Activated naive CD4-positive, alpha-beta T cell treated with anti-CD3 and anti-CD28 coated beads for 36 hours (primary cell): ENCODE measurements at regions of chr15 and their contacts with region 1.

Region 1: GRCh38 chr15:89893696-89894455 is at the start of gene AP3S2:
- DNase-seq: peak; percentile 94
- H3K4me3 Mint-ChIP-seq: peak within 1 kb of the TSS; percentile 97
- H3K27ac Mint-ChIP-seq: peak within 1 kb of the TSS; percentile 96
- H3K4me1 Mint-ChIP-seq: peaks cover 42% of the 10 kb centered on the region
- H3K27me3 Mint-ChIP-seq: no peaks in the 10 kb centered on the region
- total RNA-seq, gene AP3S2: 20.2 to 25.2 TPM

Region 2: GRCh38 chr15:89334510-89335288 is 559.2 kb before region 1 on chr15 and contains the start of gene POLG:
- CTCF ChIA-PET with region 1: no interaction called
- intact Hi-C with region 1: loop called (anchors 10 kb)
- DNase-seq: peak; percentile 99
- H3K4me3 Mint-ChIP-seq: peak within 1 kb of the TSS; percentile 90
- H3K27ac Mint-ChIP-seq: peak within 1 kb of the TSS; percentile 94
- H3K4me1 Mint-ChIP-seq: peaks cover 52% of the 10 kb centered on the region
- H3K27me3 Mint-ChIP-seq: peaks cover 3% of the 10 kb centered on the region
- total RNA-seq, gene POLG: 93.0 to 96.5 TPM

Region 3: GRCh38 chr15:89728254-89728653 is 165.6 kb before region 1 on chr15:
- CTCF ChIA-PET with region 1: no interaction called
- intact Hi-C with region 1: no loop called
- DNase-seq: no peak
- H3K4me3 Mint-ChIP-seq: no peak overlapping the region
- H3K27ac Mint-ChIP-seq: no peak overlapping the region
- H3K4me1 Mint-ChIP-seq: no peaks in the 10 kb centered on the region
- H3K27me3 Mint-ChIP-seq: no peaks in the 10 kb centered on the region

Region 4: DNA sequence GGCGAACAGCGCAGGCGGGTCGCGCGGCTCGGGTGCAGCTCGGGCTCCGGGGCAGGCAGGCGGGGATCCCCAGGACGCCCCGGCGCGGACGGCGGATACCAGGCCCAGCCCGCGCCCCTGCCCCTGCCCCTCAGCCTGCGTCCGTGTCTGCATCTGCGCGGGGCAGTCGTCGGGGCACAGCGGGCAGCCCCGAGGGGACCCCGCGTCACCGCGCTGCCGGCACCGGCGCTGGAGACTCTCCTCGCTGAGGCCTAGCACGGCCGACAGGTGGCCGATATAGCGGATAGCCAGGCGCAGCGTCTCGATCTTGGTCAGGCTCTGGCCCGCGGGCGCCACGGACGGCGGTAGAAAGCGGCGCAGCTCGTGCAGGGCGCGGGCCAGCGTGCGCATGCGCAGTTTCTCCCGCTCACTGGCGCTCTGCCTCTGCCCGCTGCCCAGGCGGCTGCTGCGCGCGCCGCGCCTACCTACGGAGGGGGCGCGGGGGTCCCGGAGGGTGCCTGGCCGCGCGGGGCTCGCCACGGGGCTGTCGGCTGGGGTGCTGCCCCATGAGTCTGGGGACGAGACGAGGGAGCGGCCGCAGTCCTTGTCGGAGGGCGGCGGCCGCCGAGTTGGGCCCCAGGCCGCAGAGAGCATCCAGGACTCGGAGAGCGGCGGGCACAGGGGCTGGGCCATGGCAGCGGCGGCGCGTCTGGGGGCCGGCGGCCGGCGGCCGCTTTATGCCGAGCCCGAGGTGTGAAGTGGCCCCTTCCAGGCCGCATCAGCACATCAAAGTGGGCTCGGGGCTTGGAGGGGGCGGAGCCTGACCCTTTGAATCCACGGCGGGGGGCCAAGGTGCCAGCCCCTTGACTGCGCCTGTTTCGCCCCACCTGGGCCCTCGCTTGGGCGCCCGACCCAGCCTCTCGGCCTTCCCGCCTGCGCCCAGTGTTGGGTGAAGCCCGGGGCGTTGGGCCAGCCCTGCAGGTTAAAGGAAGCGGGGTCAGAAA is 143.0 kb before region 1 on chr15 and contains the start of gene MESP1:
- CTCF ChIA-PET with region 1: no interaction called
- intact Hi-C with region 1: loop called (anchors 5 kb)
- DNase-seq: peak; percentile 89
- H3K4me3 Mint-ChIP-seq: peak within 1 kb of the TSS; percentile 77
- H3K27ac Mint-ChIP-seq: no peak within 1 kb of the TSS
- H3K4me1 Mint-ChIP-seq: peaks cover 5% of the 10 kb centered on the region
- H3K27me3 Mint-ChIP-seq: peaks cover 16% of the 10 kb centered on the region
- total RNA-seq, gene MESP1: 4.4 to 6.6 TPM

Region 5: GRCh38 chr15:90001683-90002427 is 108.0 kb after region 1 on chr15:
- CTCF ChIA-PET with region 1: no interaction called
- intact Hi-C with region 1: loop called (anchors 2 kb)
- DNase-seq: peak; percentile 70
- H3K4me3 Mint-ChIP-seq: peak overlapping the region; percentile 82
- H3K27ac Mint-ChIP-seq: peak overlapping the region; percentile 75
- H3K4me1 Mint-ChIP-seq: peaks cover 57% of the 10 kb centered on the region
- H3K27me3 Mint-ChIP-seq: no peaks in the 10 kb centered on the region

Region 6: DNA sequence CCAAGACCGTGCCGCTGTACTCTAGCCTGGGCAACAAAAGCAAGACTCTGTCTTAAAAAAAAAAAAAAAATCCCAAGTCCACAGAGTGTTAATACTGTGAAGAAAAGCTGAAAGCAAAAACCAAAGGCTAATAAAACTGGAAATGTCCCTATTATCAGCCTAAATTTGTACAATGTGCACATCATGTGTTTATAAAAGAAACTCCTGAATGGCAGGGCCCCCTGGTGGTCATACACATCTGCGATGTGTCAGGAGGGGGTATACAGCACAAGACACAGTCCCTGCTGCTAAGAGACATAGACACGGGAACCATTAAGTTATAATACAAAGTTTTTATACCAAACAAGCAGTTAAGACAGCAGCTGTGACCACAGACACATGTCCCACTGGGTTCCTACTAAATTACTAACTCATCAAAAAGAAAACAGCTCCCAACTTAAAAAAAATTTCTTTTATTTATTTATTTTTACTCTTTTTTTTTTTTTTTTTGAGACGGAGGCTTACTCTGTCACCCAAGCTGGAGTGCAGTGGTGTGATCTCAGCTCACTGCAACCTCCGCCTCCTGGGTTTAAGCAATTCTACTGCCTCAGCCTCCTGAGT is 177.4 kb after region 1 on chr15:
- CTCF ChIA-PET with region 1: interaction called, 60 read pairs
- intact Hi-C with region 1: loop called (anchors 1 kb)
- DNase-seq: peak; percentile 92
- H3K4me3 Mint-ChIP-seq: no peak overlapping the region
- H3K27ac Mint-ChIP-seq: no peak overlapping the region
- H3K4me1 Mint-ChIP-seq: peaks cover 12% of the 10 kb centered on the region
- H3K27me3 Mint-ChIP-seq: no peaks in the 10 kb centered on the region

Region 7: DNA sequence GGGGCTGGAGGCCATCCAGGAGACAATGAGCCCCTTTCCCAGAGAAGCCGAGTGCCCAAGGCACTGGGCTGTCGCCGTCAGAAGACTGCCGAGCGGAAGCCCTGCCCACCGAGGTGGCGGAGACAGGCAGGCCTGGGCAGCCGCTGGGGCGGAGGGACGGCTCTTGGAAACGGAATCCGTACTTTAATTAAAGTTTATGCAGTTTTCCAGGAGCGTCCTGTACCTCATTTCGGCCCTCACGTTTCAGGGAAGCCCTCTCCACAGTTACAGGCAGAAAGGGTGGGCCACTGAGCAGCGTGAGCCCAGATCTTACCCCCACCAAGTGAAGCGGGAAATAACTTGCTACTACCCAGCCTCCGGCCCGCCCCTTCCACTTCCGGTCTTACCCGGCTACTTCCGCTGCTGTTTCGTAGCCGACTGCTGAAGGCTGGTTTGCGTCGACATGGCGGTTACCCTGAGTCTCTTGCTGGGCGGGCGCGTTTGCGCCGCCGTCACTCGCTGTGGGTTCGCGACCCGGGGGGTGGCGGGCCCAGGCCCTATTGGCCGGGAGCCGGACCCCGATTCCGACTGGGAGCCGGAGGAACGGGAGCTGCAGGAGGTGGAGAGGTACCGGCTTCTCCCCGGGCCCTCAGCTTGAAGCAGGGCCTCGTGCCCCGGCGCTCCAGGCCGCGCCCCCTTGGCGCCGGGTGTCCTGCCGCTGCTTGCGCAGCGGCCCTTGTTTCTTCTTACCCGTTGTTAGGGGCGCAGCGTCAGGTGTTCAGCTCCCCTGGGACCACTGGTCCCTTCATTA is 371.6 kb after region 1 on chr15 and contains the start of gene NGRN:
- CTCF ChIA-PET with region 1: interaction called, 3 read pairs
- intact Hi-C with region 1: loop called (anchors 10 kb)
- DNase-seq: peak; percentile 95
- H3K4me3 Mint-ChIP-seq: peak within 1 kb of the TSS; percentile 83
- H3K27ac Mint-ChIP-seq: peak within 1 kb of the TSS; percentile 96
- H3K4me1 Mint-ChIP-seq: peaks cover 34% of the 10 kb centered on the region
- H3K27me3 Mint-ChIP-seq: no peaks in the 10 kb centered on the region
- total RNA-seq, gene NGRN: 30.7 to 31.0 TPM